Mucosa of descending colon (tissue), 3 donors: ENCODE measurements at regions of chr2 and their contacts with region 1.

Region 1: DNA sequence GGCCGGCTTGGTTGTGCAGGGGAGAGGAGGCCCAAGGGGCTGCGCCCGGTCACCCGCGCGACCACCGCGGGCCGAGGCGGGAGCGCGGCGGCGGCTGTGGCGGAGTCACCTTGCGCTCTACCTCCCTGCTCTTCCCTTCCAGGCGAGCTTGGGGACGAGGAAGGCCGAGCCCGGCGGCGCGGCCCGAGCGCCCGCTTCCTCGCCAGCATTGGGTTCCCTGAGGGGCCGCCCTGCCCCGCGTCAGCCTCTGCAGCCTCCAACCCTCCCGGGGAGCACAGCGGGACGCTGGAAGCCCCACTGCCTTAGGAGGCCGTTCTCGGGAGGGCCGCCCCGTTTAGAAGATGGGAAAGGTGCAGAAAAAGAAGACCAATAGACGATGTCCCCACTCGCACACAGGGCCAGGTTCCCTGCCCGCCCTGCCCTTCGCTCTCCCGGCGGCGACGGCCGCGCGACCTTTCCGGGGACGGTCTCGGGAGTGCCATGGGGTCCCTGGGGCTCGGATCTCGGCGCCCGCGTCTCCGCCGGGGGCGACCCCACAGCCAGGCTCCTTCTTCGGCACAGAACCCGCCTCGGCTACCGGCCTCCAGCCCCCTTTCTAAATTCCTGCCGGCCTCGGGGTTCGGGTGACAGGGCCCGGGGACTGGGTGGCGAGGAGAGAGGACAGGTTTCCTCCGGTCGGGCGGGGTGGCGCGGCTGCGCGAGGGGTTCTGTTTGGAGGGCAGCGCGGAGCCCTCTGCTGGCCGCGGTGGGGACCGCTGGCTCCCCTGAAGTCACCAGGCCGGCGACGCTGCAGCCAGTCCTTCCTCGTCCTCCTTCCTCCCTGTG is 85.5 kb downstream of the HS6ST1 start:
- DNase-seq: peak; percentile 92 to 95 (median 94)
- ATAC-seq: peak; percentile 96
- H3K4me3 ChIP-seq: peak overlapping the region; percentile 32
- H3K4me1 ChIP-seq: peaks cover 11% of the 10 kb centered on the region
- CTCF ChIP-seq: peak; percentile 95

Region 2: GRCh38 chr2:127864874-127865273 is 368.3 kb before region 1 on chr2:
- intact Hi-C with region 1: no loop called
- DNase-seq: peak; percentile 88 to 95 (median 89)
- ATAC-seq: peak; percentile 99
- H3K4me3 ChIP-seq: no peak overlapping the region
- H3K4me1 ChIP-seq: peaks cover 5% of the 10 kb centered on the region
- CTCF ChIP-seq: no peak

Region 3: GRCh38 chr2:128178650-128179460 is 54.3 kb before region 1 on chr2:
- intact Hi-C with region 1: loop called (anchors 5 to 10 kb)
- DNase-seq: peak in 2 of 3 donors; percentile 70 to 79
- ATAC-seq: peak; percentile 86
- H3K4me3 ChIP-seq: no peak overlapping the region
- H3K4me1 ChIP-seq: no peaks in the 10 kb centered on the region
- CTCF ChIP-seq: peak; percentile 48

Region 4: GRCh38 chr2:128347701-128348539 is 114.7 kb after region 1 on chr2:
- intact Hi-C with region 1: no loop called
- DNase-seq: no peak
- ATAC-seq: no peak
- H3K4me3 ChIP-seq: no peak overlapping the region
- H3K4me1 ChIP-seq: no peaks in the 10 kb centered on the region
- CTCF ChIP-seq: no peak

Region 5: GRCh38 chr2:128494640-128495321 is 261.6 kb after region 1 on chr2:
- intact Hi-C with region 1: no loop called
- DNase-seq: no peak
- ATAC-seq: peak; percentile 14
- H3K4me3 ChIP-seq: no peak overlapping the region
- H3K4me1 ChIP-seq: no peaks in the 10 kb centered on the region
- CTCF ChIP-seq: no peak